Activated T-helper 2 cell treated with anti-CD3 and anti-CD28 coated beads, Interferon-gamma antibody, Interleukin-2, Interleukin-4, amounts not matched to agents 10 μg/mL and 5 μg/mL and 100 μg/mL, durations not matched to agents 14 hours and 24 hours and 36 hours (primary cell): ENCODE measurements at regions of chr2 and their contacts with region 1.

Region 1: GRCh38 chr2:113105047-113105785 is 22.2 kb upstream of the IL1RN start:
- DNase-seq: no peak
- H3K4me3 Mint-ChIP-seq: no peak overlapping the region
- H3K27ac Mint-ChIP-seq: peak overlapping the region; percentile 100
- H3K4me1 Mint-ChIP-seq: peaks cover 61% of the 10 kb centered on the region
- H3K27me3 Mint-ChIP-seq: no peaks in the 10 kb centered on the region

Region 2: GRCh38 chr2:112811841-112812306 is 293.3 kb before region 1 on chr2:
- intact Hi-C with region 1: no loop called
- DNase-seq: no peak
- H3K4me3 Mint-ChIP-seq: no peak overlapping the region
- H3K27ac Mint-ChIP-seq: peak overlapping the region; percentile 33
- H3K4me1 Mint-ChIP-seq: peaks cover 23% of the 10 kb centered on the region
- H3K27me3 Mint-ChIP-seq: no peaks in the 10 kb centered on the region

Region 3: DNA sequence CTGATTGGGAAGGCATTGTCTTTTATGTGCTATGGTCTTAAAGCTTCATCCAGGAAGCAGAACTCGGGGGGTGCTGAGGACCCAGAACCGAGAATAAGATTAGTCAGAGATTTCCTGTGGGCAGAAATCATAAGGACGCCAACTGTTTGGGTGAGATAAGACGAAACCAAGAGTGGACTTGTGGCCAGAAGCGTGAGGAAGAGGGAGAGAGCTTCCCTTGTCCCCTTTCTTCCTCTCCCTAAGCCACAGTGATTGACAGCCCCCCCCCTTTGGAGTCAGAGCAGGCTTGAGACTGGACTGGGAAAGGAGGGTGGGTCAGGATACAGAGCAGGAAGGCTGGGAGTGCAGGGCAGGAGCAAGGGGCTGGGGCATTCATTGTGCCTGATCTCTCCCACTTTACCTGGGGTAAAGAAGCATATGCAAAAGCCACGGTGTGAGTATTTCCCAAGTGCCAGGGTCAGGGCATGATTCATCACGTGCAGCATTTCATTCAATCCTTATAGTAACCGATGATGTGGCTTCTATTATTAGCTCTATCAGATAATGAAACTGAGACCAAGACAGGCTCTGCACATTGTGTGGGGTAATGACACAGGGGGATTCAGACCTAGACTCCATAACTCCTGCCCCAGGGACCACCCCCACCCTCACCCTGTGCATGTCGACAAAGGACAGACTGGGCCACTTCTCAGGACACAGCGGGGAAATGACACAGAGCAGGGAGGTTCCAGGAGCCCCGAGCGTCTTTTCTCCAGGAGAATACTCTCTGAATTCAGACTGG is 19.2 kb after region 1 on chr2:
- intact Hi-C with region 1: loop called (anchors 2 kb)
- DNase-seq: no peak
- H3K4me3 Mint-ChIP-seq: no peak overlapping the region
- H3K27ac Mint-ChIP-seq: peak overlapping the region; percentile 51
- H3K4me1 Mint-ChIP-seq: peaks cover 71% of the 10 kb centered on the region
- H3K27me3 Mint-ChIP-seq: no peaks in the 10 kb centered on the region